CD8-positive, alpha-beta memory T cell (primary cell): ENCODE measurements at regions of chr1 and their contacts with region 1.

Region 1: DNA sequence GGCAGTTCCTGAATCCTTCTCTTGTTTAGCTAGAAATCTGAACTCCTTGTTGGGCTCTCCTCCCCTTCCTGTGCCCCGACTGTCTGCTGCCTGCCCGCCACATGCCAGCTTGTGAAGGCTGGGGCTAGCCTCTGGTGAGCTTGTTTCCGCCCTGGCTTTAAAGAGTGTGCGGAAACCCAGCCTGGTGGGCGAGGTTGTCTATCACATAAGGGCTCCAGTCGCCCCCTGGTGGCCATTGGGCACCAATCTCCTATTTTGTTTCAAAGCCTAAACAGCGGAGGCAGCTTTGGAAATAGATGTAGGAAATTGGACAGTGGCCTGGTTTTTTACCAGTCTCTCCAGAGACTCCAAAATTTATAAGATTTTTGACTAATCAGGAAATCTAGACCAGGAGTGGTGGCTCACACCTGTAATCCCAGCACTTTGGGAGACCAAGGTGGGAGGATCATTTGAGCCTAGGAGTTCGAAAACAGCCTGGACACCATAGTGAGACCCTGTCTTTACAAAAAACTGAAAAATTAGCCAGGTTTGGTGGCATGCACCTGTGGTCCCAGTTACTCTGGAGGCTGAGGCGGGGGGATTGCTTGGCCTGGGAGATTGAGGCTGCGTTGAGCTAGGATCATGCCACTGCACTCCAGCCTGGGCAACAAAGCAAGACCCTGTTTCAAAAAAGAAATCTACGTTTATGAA is 9.8 kb downstream of the ATP8B2 start:
- DNase-seq: peak; percentile 85 to 94 (median 86)
- H3K4me3 ChIP-seq: peak overlapping the region; percentile 38
- H3K4me3 Mint-ChIP-seq: peak overlapping the region; percentile 49 to 84 (median 60)
- H3K27ac ChIP-seq: no peak overlapping the region
- H3K27ac Mint-ChIP-seq: peak overlapping the region; percentile 86 to 98 (median 91)
- H3K4me1 ChIP-seq: peaks cover 82% of the 10 kb centered on the region
- H3K4me1 Mint-ChIP-seq: peaks cover 73 to 87% (median 82%) of the 10 kb centered on the region in 3 donors
- H3K27me3 ChIP-seq: no peaks in the 10 kb centered on the region
- H3K27me3 Mint-ChIP-seq: no peaks in the 10 kb centered on the region

Region 2: DNA sequence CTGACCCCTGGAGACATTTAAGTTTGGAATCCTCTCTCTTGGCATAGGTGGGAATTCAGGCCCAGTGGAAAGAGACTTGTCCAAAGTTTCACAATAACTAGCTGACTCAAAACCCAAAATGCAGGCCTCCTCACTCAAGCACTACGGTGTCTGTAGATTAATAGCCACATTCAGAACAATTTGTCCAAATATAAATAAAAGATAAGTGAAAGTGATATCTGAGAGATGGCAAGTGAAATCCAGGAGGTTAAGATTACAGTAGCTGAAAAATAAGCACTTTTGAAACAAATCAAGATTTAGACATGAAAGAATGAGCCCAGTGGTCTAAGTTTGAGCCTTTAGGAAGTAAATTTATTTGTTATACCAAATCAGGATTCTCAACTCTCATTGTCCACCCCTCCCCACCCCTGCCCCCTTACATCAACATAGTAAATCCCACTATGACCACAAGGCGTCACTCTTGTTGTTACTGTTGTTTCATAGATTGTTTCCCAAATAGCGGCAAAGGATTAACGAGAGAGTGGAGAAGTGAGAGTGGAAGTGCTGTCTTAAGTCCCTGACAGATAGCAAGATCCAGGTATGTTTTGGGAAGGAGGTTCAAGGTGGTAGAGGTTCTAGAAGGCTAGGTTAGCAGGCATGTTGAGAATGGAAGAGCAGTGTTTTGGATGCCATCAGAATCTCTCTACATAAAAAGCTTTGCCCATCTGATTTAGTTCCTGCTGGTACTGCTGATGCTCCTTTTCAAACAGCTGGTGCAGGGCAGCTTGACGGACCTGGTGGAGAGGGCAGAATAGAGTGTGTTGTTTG is 136.2 kb before region 1 on chr1:
- CTCF ChIA-PET with region 1: interaction called, 21 read pairs
- POLR2A ChIA-PET with region 1: interaction called, 3 read pairs
- DNase-seq: peak in 4 of 5 donors; percentile 21 to 60 (median 46)
- H3K4me3 ChIP-seq: peak overlapping the region; percentile 11
- H3K4me3 Mint-ChIP-seq: no peak overlapping the region
- H3K27ac ChIP-seq: no peak overlapping the region
- H3K27ac Mint-ChIP-seq: peak overlapping the region in 3 of 8 donors; percentile 11 to 48 (median 25)
- H3K4me1 ChIP-seq: peaks cover 8% of the 10 kb centered on the region
- H3K4me1 Mint-ChIP-seq: no peaks in the 10 kb centered on the region
- H3K27me3 ChIP-seq: no peaks in the 10 kb centered on the region
- H3K27me3 Mint-ChIP-seq: peaks cover 4 to 7% of the 10 kb centered on the region in 2 donors

Region 3: GRCh38 chr1:154272217-154272998 is 62.8 kb before region 1 on chr1 and contains the start of gene HAX1:
- CTCF ChIA-PET with region 1: interaction called, 37 read pairs
- POLR2A ChIA-PET with region 1: interaction called, 6 read pairs
- DNase-seq: peak; percentile 93 to 98 (median 97)
- H3K4me3 ChIP-seq: peak within 1 kb of the TSS; percentile 92
- H3K4me3 Mint-ChIP-seq: peak within 1 kb of the TSS; percentile 94 to 99 (median 98)
- H3K27ac ChIP-seq: peak within 1 kb of the TSS; percentile 88
- H3K27ac Mint-ChIP-seq: peak within 1 kb of the TSS; percentile 94 to 99 (median 99)
- H3K4me1 ChIP-seq: peaks cover 19% of the 10 kb centered on the region
- H3K4me1 Mint-ChIP-seq: peaks cover 35 to 41% (median 40%) of the 10 kb centered on the region in 3 donors
- H3K27me3 ChIP-seq: no peaks in the 10 kb centered on the region
- H3K27me3 Mint-ChIP-seq: peaks cover 0 to 3% of the 10 kb centered on the region in 2 donors
- total RNA-seq, gene HAX1: 145 to 153 TPM